ENCODE measurements at regions of chr14 and their contacts with region 1.

Region 1: GRCh38 chr14:95442633-95443021 is 73.8 kb downstream of the SYNE3 start:
- ATAC-seq: peak; percentile 99 to 100 (median 100)
- H3K4me3 ChIP-seq: no peak overlapping the region
- H3K27ac ChIP-seq: no peak overlapping the region
- H3K4me1 ChIP-seq: no peaks in the 10 kb centered on the region

Region 2: DNA sequence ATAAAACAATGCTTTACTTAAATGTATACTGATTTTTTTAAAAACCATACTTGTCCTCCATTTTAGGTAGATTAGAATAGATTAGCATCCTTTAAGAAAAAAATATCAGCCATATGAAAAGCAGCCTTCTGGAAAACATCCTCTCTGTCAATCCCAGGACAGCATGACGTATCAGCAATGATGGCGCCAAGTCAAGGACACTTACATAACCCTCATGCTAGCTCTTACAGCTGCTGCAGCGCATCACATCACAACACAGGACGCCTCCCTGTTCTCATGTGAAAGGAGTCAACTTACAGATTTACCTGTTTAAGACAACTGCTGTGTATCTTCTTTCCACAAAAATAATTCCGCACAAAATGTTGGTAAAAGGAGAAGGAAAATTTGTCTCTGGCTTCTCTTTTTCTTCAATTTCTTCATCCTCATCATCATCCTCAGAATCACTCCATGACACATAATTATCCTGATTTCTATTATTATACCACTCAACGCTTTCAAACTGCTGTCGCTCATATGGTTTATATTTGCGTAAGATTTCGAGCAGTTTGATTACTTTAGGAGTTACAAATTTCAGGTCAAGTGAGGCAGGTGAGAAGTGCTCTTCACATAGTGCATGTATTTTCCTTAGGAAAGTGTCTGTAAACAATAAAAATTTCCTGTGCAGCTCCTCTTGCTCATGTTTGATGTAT is 318.6 kb before region 1 on chr14:
- in situ Hi-C with region 1: loop called in 1 of 9 experiments (anchors 25 kb)
- ATAC-seq: no peak
- H3K4me3 ChIP-seq: no peak overlapping the region
- H3K27ac ChIP-seq: no peak overlapping the region
- H3K4me1 ChIP-seq: peaks cover 8 to 12% of the 10 kb centered on the region in 2 donors

Region 3: GRCh38 chr14:95527387-95528002 is 84.9 kb after region 1 on chr14:
- in situ Hi-C with region 1: loop called in 1 of 9 experiments (anchors 10 kb)
- ATAC-seq: peak in 4 of 8 experiments; percentile 6 to 82 (median 60)
- H3K4me3 ChIP-seq: no peak overlapping the region
- H3K27ac ChIP-seq: no peak overlapping the region
- H3K4me1 ChIP-seq: peaks cover 34 to 35% of the 10 kb centered on the region in 2 donors

Region 4: DNA sequence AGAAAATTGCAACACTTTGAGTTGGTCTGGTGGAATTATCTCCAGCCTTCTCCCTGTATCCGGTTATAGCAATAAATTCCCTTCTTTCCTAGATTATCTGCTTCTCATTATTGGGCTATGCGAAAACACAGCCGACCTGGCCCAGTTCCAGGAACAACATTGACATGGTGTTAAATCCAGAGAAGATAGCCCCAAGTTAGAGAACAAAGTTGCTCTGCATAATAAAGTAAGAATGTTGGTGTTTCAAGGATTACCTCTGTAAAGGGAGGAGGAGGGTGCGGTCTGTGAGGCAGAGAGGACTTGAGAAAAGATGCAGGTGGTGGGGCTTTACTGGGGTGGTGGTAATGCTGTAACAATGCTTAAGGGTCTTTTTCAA is 259.2 kb after region 1 on chr14:
- in situ Hi-C with region 1: no loop called
- ATAC-seq: peak in 1 of 8 experiments; percentile 80
- H3K4me3 ChIP-seq: no peak overlapping the region
- H3K27ac ChIP-seq: no peak overlapping the region
- H3K4me1 ChIP-seq: no peaks in the 10 kb centered on the region

Measured in motor neuron (in vitro differentiated cells).